ENCODE measurements at regions of chr11 and their contacts with region 1.

Region 1: GRCh38 chr11:67428052-67428914 is at the start of gene RPS6KB2:
- DNase-seq: peak; percentile 99
- ATAC-seq: peak; percentile 81
- H3K4me3 Mint-ChIP-seq: peak within 1 kb of the TSS; percentile 90
- H3K27ac Mint-ChIP-seq: peak within 1 kb of the TSS; percentile 98
- H3K4me1 Mint-ChIP-seq: peaks cover 37% of the 10 kb centered on the region
- H3K27me3 Mint-ChIP-seq: no peaks in the 10 kb centered on the region
- total RNA-seq, gene RPS6KB2: 53.4 to 57.2 TPM

Region 2: DNA sequence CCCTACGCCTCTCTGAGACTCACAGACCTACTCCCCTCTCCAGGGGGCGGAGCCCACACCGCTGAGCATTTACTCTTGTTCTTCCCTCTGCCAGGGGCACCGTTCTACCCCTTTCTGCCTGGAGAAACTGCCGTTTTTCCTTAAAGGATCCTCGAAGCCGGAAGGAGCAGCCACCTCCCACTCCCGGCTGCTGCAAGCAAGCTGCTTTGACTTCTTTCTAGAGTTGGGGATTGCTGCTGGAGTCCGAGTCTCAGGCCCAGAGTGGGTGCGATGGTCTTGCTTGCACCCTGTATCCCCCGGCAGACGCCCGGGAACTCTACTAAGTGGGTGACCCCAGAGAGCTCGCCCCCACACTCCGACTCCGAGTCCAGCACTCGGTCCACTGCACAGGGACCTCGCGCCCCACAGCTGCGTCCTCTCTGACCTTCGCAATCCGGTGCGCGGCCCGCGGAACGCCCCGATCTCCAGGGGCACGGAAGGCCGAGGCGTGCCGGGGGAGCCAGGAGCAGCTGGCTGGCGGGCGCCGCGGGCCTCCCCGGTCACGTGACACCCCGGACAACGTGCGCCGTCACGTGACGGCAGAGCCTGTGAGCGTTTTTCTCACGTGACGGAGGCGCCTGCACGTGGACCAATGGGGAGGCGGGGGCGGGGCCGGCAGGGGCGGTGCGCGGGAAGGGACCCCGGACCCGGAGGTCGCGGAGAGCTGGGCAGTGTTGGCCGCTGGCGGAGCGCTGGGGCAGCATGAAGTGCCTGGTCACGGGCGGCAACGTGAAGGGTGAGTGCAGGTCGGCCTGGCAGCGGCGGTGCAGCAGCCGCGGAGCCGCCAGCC is 36.8 kb before region 1 on chr11 and contains the start of gene RAD9A:
- CTCF ChIA-PET with region 1: no interaction called
- POLR2A ChIA-PET with region 1: no interaction called
- intact Hi-C with region 1: loop called in 1 of 2 experiments (anchors 1 kb)
- DNase-seq: peak; percentile 97
- ATAC-seq: peak; percentile 74
- H3K4me3 Mint-ChIP-seq: peak within 1 kb of the TSS; percentile 89
- H3K27ac Mint-ChIP-seq: peak within 1 kb of the TSS; percentile 80
- H3K4me1 Mint-ChIP-seq: peaks cover 34% of the 10 kb centered on the region
- H3K27me3 Mint-ChIP-seq: no peaks in the 10 kb centered on the region
- total RNA-seq, gene RAD9A: 28.8 to 30.0 TPM

Region 3: GRCh38 chr11:67452141-67452952 is 24.1 kb after region 1 on chr11 and contains the start of gene GPR152:
- CTCF ChIA-PET with region 1: no interaction called
- POLR2A ChIA-PET with region 1: no interaction called
- intact Hi-C with region 1: no loop called
- DNase-seq: no peak
- ATAC-seq: no peak
- H3K4me3 Mint-ChIP-seq: no peak within 1 kb of the TSS
- H3K27ac Mint-ChIP-seq: no peak within 1 kb of the TSS
- H3K4me1 Mint-ChIP-seq: peaks cover 22% of the 10 kb centered on the region
- H3K27me3 Mint-ChIP-seq: no peaks in the 10 kb centered on the region
- total RNA-seq, gene GPR152: not detected

Region 4: DNA sequence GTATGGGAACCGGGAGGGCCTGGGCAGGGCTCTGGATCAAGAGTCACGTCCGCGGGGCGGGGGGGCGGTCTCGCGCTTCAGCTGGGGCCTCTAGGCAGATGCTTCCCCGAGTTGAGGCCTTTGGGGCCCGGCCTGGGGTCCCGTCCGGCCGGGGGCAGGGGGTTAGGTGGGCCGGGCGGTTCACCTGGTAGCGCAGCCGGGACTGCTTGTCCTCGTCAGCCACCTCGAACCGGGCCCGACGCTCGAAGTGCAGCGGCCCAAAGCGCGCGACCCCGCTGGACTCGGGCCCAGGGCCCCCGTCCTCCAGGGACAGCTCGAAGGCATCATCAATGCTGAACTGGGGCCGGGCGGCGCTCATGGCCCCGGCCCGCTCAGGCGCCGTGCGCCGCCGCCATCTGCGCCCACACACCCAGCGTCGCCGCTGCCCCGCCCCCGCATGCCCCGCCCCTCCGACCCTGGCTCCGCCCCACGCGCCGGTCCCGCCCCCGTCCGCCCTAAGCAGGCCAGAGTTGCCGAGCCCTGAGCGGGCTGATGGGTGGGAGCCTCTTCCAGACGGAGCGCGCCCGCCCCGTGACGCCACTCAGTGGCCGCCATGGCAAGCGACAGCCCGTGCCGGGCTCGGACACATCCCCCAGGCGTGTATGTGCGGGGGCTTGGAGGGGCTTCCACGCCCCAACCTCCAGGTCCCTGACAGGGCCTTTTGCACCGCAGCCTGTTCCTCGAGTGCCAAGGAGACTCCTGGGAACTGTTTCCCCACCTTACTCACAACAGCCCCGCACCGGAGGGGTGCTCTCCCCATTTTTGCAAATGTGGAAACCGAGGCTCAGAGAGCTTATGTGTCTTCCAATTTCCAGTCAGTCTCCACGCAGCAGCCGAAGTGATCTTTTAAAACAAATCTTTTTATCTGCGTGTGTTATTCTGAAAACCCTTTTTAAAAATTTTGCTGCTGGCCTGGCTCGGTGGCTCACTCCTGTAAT is 40.8 kb after region 1 on chr11 and contains the start of gene TMEM134:
- CTCF ChIA-PET with region 1: interaction called, 3 read pairs
- POLR2A ChIA-PET with region 1: no interaction called
- intact Hi-C with region 1: loop called (anchors 1 to 5 kb)
- DNase-seq: peak; percentile 97
- ATAC-seq: peak; percentile 78
- H3K4me3 Mint-ChIP-seq: peak within 1 kb of the TSS; percentile 82
- H3K27ac Mint-ChIP-seq: peak within 1 kb of the TSS; percentile 86
- H3K4me1 Mint-ChIP-seq: peaks cover 23% of the 10 kb centered on the region
- H3K27me3 Mint-ChIP-seq: no peaks in the 10 kb centered on the region
- total RNA-seq, gene TMEM134: 69.9 to 74.7 TPM

Region 5: DNA sequence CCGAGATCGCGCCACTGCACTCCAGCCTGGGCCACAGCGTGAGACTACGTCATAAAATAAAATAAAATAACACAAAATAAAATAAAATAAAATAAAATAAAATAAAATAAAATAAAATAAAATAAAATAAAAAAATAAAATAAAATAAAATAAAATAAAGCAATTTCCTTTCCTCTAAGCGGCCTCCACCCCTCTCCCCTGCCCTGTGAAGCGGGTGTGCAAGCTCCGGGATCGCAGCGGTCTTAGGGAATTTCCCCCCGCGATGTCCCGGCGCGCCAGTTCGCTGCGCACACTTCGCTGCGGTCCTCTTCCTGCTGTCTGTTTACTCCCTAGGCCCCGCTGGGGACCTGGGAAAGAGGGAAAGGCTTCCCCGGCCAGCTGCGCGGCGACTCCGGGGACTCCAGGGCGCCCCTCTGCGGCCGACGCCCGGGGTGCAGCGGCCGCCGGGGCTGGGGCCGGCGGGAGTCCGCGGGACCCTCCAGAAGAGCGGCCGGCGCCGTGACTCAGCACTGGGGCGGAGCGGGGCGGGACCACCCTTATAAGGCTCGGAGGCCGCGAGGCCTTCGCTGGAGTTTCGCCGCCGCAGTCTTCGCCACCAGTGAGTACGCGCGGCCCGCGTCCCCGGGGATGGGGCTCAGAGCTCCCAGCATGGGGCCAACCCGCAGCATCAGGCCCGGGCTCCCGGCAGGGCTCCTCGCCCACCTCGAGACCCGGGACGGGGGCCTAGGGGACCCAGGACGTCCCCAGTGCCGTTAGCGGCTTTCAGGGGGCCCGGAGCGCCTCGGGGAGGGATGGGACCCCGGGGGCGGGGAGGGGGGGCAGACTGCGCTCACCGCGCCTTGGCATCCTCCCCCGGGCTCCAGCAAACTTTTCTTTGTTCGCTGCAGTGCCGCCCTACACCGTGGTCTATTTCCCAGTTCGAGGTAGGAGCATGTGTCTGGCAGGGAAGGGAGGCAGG is 155.2 kb after region 1 on chr11 and contains the start of gene GSTP1:
- CTCF ChIA-PET with region 1: no interaction called
- POLR2A ChIA-PET with region 1: no interaction called
- intact Hi-C with region 1: loop called in 1 of 2 experiments (anchors 1 kb)
- DNase-seq: peak; percentile 90
- ATAC-seq: peak; percentile 85
- H3K4me3 Mint-ChIP-seq: peak within 1 kb of the TSS; percentile 89
- H3K27ac Mint-ChIP-seq: peak within 1 kb of the TSS; percentile 94
- H3K4me1 Mint-ChIP-seq: peaks cover 52% of the 10 kb centered on the region
- H3K27me3 Mint-ChIP-seq: peaks cover 10% of the 10 kb centered on the region
- total RNA-seq, gene GSTP1: 376 to 463 TPM

Region 6: DNA sequence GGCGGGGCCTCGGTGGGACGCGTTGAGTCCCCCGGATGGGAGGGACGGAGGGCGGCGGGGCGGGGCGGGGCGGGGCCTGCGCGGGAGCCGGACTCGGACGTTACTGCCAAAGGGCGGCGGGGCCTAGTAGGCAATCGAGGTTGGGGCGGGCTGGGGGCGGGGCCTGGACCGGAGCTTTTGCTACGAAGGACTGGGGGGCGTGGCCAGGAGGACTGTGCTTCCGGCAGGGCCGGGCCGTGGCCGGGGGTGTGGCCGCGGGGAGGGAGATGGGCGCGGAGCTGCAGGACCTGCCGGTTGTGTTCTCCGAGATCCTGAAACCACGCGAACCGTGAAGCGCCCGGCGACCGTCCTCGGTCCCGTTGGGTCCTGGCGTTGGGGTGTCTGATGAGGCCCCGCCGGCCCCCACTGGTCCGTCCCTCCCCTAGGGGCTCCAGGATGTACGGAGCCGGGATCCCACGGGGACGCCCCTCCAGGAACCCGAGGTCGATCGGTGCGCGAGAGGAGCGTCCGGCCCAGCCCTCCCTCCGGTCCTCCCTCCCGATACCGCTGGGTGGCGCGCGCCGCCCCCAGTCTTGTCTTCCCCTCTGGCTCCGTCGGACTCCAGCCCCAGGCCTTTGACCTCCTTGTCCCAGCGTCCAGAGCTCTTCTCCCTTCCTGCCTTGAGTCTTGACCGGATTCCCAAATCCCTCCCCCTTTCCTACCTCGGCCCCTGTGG is 202.1 kb after region 1 on chr11:
- CTCF ChIA-PET with region 1: no interaction called
- POLR2A ChIA-PET with region 1: no interaction called
- intact Hi-C with region 1: loop called in 1 of 2 experiments (anchors 1 kb)
- DNase-seq: peak; percentile 99
- ATAC-seq: peak; percentile 79
- H3K4me3 Mint-ChIP-seq: peak overlapping the region; percentile 79
- H3K27ac Mint-ChIP-seq: peak overlapping the region; percentile 73
- H3K4me1 Mint-ChIP-seq: peaks cover 7% of the 10 kb centered on the region
- H3K27me3 Mint-ChIP-seq: no peaks in the 10 kb centered on the region

Measured in activated CD4-positive, alpha-beta T cell treated with anti-CD3 and anti-CD28 coated beads for 36 hours (primary cell).